ENCODE measurements at regions of chr1 and their contacts with region 1.

Region 1: GRCh38 chr1:58768971-58769808 is 14.7 kb downstream of the JUN start:
- DNase-seq: peak in 1 of 2 experiments; percentile 68
- H3K4me3 ChIP-seq: no peak overlapping the region
- H3K27ac ChIP-seq: no peak overlapping the region
- H3K4me1 ChIP-seq: peaks cover 24% of the 10 kb centered on the region
- H3K27me3 ChIP-seq: no peaks in the 10 kb centered on the region
- CTCF ChIP-seq: peak; percentile 87

Region 2: GRCh38 chr1:58500043-58500442 is 269.1 kb before region 1 on chr1:
- CTCF ChIA-PET with region 1: no interaction called
- POLR2A ChIA-PET with region 1: no interaction called
- intact Hi-C with region 1: no loop called
- DNase-seq: no peak
- H3K4me3 ChIP-seq: no peak overlapping the region
- H3K27ac ChIP-seq: no peak overlapping the region
- H3K4me1 ChIP-seq: no peaks in the 10 kb centered on the region
- H3K27me3 ChIP-seq: no peaks in the 10 kb centered on the region
- CTCF ChIP-seq: no peak

Region 3: DNA sequence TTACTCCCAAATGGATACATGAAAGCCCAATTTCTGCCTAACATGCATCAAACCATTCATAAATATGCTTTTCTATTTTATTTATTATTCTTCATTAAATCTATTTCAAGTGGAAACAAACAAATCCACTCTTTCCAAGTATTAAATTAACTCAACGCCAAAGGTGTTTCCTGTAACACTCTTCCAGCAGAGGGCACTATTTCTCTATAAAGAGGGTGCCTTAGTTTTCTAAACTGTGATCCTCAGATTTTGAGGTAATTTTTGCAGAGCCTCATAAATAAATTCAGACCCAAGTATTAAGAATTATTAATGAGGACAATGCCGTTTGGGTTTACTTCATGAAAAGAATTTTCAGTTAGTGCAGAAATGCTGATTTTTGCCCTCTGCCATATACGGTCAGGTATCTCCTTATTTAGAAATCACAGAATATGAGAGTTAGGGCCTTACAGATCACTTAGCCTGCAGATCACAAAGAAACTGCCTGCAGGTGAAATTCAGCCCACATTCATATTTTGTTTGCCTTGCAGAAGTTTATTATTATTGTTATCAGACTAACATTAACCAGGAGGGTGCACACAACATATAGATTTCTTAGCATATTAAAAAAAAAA is 29.2 kb before region 1 on chr1:
- CTCF ChIA-PET with region 1: interaction called, 3 read pairs
- POLR2A ChIA-PET with region 1: no interaction called
- intact Hi-C with region 1: loop called (anchors 1 kb)
- DNase-seq: peak in 1 of 2 experiments; percentile 56
- H3K4me3 ChIP-seq: no peak overlapping the region
- H3K27ac ChIP-seq: no peak overlapping the region
- H3K4me1 ChIP-seq: peaks cover 12% of the 10 kb centered on the region
- H3K27me3 ChIP-seq: no peaks in the 10 kb centered on the region
- CTCF ChIP-seq: peak; percentile 95